GM10248 (cell line): ENCODE measurements at regions of chr6 and their contacts with region 1.

Region 1: DNA sequence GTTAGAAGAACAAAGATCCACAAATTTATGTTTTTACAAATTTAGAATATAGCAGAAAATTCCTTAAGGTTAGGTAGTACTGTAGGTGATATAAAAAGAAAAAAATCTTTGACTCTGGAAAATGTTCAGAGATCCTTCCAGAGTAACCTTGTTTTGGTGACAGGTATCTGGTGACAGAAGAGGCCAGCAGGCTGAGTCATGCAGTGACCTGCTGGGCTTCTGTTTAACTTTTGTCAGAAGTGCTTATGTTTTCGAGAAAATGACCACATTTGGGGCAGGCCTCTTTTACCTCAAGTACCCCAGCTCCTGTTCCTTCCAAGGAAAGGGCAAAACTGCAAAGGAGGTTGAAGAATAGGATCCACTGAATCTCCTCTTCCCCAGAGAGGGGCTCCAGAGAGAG is 10.5 kb upstream of the CLDN20 start:
- DNase-seq: no peak
- CTCF ChIP-seq: no peak

Region 2: DNA sequence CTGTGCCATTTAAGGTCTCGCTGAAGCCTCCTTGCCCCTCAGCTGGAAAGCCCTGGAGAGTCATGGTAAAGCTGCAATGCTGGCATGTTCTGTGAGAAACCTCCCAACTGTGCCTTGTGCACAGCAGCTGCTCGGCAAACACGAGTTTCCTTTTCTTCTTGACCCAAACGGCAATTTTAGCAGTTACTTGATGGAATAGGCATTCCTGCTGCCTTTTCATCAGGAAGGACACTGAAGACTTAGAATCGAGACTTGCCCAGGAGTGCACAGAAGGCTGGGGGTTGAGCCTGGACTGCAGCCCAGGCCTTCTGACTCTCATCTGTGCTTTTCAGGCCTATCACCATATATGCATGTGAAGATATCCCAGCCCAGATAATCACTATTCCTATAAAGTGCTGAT is 18.2 kb before region 1 on chr6:
- CTCF ChIA-PET with region 1: interaction called, 38 read pairs
- POLR2A ChIA-PET with region 1: no interaction called
- DNase-seq: no peak
- CTCF ChIP-seq: no peak

Region 3: GRCh38 chr6:155264693-155265320 is 11.5 kb after region 1 on chr6:
- CTCF ChIA-PET with region 1: interaction called, 16 read pairs
- POLR2A ChIA-PET with region 1: no interaction called
- DNase-seq: no peak
- CTCF ChIP-seq: no peak

Region 4: GRCh38 chr6:155351273-155352129 is 98.2 kb after region 1 on chr6:
- CTCF ChIA-PET with region 1: no interaction called
- POLR2A ChIA-PET with region 1: no interaction called
- DNase-seq: peak; percentile 75
- CTCF ChIP-seq: no peak

Region 5: DNA sequence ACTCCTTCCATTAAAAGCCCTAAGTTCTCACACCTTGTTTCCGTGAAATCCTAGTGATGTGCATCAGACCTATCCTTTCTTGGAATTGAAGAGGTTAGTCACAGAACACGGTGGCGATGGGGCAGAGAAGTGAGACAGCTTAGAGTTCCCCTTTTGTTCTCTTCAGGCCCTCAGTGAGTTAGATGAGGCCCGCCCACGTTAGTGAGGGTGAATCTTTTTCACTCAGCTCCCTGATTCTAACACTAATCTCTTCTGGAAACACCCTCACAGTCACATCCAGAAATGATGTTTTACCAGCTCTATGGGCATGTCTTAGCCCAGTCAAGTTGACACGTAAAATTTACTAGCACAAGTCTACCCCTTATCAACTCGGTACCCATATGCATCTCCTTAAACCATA is 375.0 kb after region 1 on chr6:
- CTCF ChIA-PET with region 1: no interaction called
- POLR2A ChIA-PET with region 1: no interaction called
- DNase-seq: peak; percentile 14
- CTCF ChIP-seq: no peak